CD8-positive, alpha-beta T cell (primary cell): ENCODE measurements at regions of chr13 and their contacts with region 1.

Region 1: DNA sequence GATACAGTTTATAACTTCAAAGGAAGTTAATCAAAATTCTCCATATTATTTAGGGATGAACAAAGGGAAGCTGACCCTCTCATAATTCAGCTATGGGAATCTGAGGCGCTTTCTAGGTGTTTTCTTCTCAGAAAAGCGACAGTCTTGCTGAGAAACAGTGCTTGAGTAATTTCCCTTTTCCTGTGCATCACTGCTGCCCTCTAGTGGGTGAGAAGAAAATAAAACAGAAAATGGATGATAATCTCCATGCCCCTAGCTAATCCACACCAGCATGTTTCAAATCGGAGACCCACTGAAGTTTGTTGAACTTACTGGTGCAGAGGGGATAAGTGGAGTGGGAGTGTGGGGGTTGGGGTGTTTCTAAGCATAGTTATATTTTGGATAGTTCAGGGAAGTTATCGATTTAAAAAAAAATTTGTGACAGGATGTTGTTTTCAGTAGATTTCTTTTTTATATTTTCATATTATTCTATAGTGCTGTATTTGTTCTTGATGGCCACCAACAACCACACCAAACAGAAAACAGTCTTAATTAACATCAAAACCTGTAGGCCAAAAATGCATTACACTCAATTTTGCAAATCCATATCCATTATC is 21.4 kb downstream of the LCP1 start:
- DNase-seq: peak in 3 of 9 experiments; percentile 41 to 92 (median 85)
- ATAC-seq: peak; percentile 76
- H3K4me3 ChIP-seq: no peak overlapping the region
- H3K4me3 Mint-ChIP-seq: peak overlapping the region; percentile 73
- H3K27ac ChIP-seq: peak overlapping the region in 1 of 2 experiments; percentile 77
- H3K27ac Mint-ChIP-seq: peak overlapping the region; percentile 94
- H3K4me1 ChIP-seq: peaks cover 45% of the 10 kb centered on the region
- H3K4me1 Mint-ChIP-seq: peaks cover 55% of the 10 kb centered on the region
- H3K27me3 ChIP-seq: no peaks in the 10 kb centered on the region
- H3K27me3 Mint-ChIP-seq: no peaks in the 10 kb centered on the region
- CTCF ChIP-seq: peak; percentile 79

Region 2: DNA sequence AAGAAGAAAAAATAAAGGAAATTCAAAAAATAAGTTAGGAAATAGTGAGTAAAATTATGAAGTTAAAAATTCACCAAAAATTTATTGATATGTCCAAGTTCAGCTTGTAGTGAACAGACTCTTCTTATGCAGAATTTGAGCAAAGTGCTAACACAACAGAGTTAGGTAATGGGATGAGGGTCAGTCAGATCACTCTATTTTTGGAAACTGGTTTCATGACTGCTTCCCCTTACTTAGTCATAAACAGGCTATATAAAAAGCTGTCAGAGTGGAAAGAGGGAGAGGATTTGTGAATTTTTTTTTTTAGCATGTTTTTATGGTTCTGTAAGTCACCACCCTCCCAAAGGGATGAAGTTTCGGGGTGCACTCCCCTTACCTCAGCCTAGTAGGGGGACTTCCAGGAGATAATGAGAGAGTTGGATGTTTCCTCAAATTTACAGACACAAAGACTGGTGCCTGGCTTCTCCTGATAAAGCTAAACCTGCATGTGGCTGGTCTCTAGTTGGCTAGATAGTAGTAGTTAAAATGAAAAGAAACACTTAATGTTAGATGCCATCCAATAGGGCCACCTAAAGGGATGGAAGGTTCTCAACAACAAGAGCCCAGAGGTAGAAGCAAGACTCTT is 60.3 kb before region 1 on chr13:
- CTCF ChIA-PET with region 1: no interaction called
- POLR2A ChIA-PET with region 1: no interaction called
- intact Hi-C with region 1: no loop called
- DNase-seq: no peak
- ATAC-seq: no peak
- H3K4me3 ChIP-seq: no peak overlapping the region
- H3K4me3 Mint-ChIP-seq: no peak overlapping the region
- H3K27ac ChIP-seq: no peak overlapping the region
- H3K27ac Mint-ChIP-seq: no peak overlapping the region
- H3K4me1 ChIP-seq: no peaks in the 10 kb centered on the region
- H3K4me1 Mint-ChIP-seq: no peaks in the 10 kb centered on the region
- H3K27me3 ChIP-seq: no peaks in the 10 kb centered on the region
- H3K27me3 Mint-ChIP-seq: peaks cover 5% of the 10 kb centered on the region
- CTCF ChIP-seq: no peak

Region 3: DNA sequence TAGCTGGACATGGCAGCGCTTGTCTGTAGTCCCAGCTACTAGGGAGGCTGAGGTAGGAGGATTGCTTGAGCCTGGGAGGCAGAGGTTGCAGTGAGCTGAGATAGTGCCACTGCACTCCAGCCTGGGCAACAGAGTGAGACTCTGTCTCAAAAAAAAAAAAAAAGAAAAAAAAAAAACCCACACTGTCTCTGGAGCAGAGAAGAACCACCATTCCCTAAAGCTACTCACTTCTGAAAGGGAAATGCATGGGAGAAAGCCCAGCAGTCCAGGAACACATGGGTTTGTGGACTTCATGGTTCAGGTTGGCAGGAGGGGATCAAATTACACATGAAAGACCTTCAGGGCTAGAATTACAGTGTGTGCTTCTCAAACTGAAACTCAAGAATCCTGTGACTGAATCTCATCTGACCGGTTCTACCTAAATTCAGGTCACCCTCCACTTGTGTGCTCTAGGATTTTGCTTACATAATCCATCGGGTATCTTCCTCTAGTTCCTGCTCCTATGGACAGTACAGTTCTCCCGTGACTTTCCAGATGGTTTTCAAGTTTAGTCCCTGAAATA is 25.5 kb before region 1 on chr13:
- CTCF ChIA-PET with region 1: interaction called, 10 read pairs
- POLR2A ChIA-PET with region 1: no interaction called
- intact Hi-C with region 1: no loop called
- DNase-seq: no peak
- ATAC-seq: no peak
- H3K4me3 ChIP-seq: no peak overlapping the region
- H3K4me3 Mint-ChIP-seq: no peak overlapping the region
- H3K27ac ChIP-seq: peak overlapping the region in 1 of 2 experiments; percentile 24
- H3K27ac Mint-ChIP-seq: peak overlapping the region; percentile 84
- H3K4me1 ChIP-seq: no peaks in the 10 kb centered on the region
- H3K4me1 Mint-ChIP-seq: peaks cover 30% of the 10 kb centered on the region
- H3K27me3 ChIP-seq: no peaks in the 10 kb centered on the region
- H3K27me3 Mint-ChIP-seq: no peaks in the 10 kb centered on the region
- CTCF ChIP-seq: no peak

Region 4: GRCh38 chr13:46146899-46147298 is 13.7 kb before region 1 on chr13:
- CTCF ChIA-PET with region 1: interaction called, 19 read pairs
- POLR2A ChIA-PET with region 1: no interaction called
- intact Hi-C with region 1: loop called in 1 of 2 experiments (anchors 1 kb)
- DNase-seq: no peak
- ATAC-seq: no peak
- H3K4me3 ChIP-seq: no peak overlapping the region
- H3K4me3 Mint-ChIP-seq: no peak overlapping the region
- H3K27ac ChIP-seq: no peak overlapping the region
- H3K27ac Mint-ChIP-seq: no peak overlapping the region
- H3K4me1 ChIP-seq: peaks cover 7% of the 10 kb centered on the region
- H3K4me1 Mint-ChIP-seq: peaks cover 29% of the 10 kb centered on the region
- H3K27me3 ChIP-seq: no peaks in the 10 kb centered on the region
- H3K27me3 Mint-ChIP-seq: no peaks in the 10 kb centered on the region
- CTCF ChIP-seq: no peak

Region 5: GRCh38 chr13:46176756-46177155 is 16.2 kb after region 1 on chr13:
- CTCF ChIA-PET with region 1: interaction called, 148 read pairs
- POLR2A ChIA-PET with region 1: interaction called, 15 read pairs
- intact Hi-C with region 1: no loop called
- DNase-seq: peak in 1 of 9 experiments; percentile 62
- ATAC-seq: no peak
- H3K4me3 ChIP-seq: peak overlapping the region; percentile 40
- H3K4me3 Mint-ChIP-seq: peak overlapping the region; percentile 79
- H3K27ac ChIP-seq: peak overlapping the region; percentile 51 to 94
- H3K27ac Mint-ChIP-seq: peak overlapping the region; percentile 94
- H3K4me1 ChIP-seq: peaks cover 66% of the 10 kb centered on the region
- H3K4me1 Mint-ChIP-seq: peaks cover 66% of the 10 kb centered on the region
- H3K27me3 ChIP-seq: no peaks in the 10 kb centered on the region
- H3K27me3 Mint-ChIP-seq: no peaks in the 10 kb centered on the region
- CTCF ChIP-seq: no peak

Region 6: DNA sequence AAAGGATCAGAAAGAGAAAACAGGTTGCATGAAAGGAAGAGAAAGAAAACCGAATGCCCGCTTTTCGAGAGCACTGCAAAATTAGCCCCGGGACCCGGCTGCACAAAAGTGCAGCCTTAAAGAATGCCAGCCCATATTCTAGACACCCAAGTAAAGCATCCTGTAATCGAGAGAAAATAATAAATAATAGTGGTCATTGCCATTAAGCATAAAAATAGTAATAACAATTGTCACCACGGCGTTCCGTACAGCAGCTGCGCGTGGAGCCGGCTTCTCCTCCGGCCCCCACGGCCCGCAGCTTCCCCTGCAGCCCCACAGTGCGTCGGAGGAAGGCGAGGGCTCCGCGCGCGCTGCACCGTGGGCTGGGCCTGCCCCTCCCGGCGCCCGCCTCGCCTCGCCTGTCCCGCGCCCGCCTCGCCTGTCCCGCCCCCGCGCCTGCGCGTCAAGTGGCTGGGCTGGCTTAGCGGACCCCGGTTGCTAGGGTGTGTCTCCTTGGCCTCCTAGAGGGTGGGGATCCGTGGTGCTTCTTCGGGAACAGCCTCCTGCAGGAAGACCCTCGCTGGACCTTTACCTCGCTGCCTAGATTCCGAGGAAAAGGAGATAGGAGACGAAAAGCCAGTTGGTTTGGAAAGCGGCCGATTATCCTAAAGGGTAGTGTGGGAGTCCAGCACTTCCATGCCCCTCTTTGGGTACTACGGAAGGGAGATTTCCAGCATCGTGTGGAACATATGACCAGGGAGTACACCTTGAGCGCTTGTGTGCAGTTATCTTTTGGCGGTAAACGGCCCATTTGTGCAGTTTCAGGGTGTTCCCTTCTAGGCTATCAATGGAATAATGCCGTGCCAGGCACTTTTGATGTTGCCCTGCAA is 51.1 kb after region 1 on chr13 and contains the start of gene LRRC63:
- CTCF ChIA-PET with region 1: interaction called, 7 read pairs
- POLR2A ChIA-PET with region 1: no interaction called
- intact Hi-C with region 1: loop called (anchors 1 to 10 kb)
- DNase-seq: peak; percentile 58 to 91 (median 84)
- ATAC-seq: peak; percentile 92
- H3K4me3 ChIP-seq: peak within 1 kb of the TSS; percentile 69 to 73
- H3K4me3 Mint-ChIP-seq: peak within 1 kb of the TSS; percentile 86
- H3K27ac ChIP-seq: peak within 1 kb of the TSS; percentile 74 to 90
- H3K27ac Mint-ChIP-seq: peak within 1 kb of the TSS; percentile 93
- H3K4me1 ChIP-seq: peaks cover 13% of the 10 kb centered on the region
- H3K4me1 Mint-ChIP-seq: peaks cover 19% of the 10 kb centered on the region
- H3K27me3 ChIP-seq: no peaks in the 10 kb centered on the region
- H3K27me3 Mint-ChIP-seq: no peaks in the 10 kb centered on the region
- CTCF ChIP-seq: no peak
- total RNA-seq, gene LRRC63: 0.22 to 0.31 TPM

Region 7: GRCh38 chr13:46232281-46232680 is 71.7 kb after region 1 on chr13:
- CTCF ChIA-PET with region 1: no interaction called
- POLR2A ChIA-PET with region 1: no interaction called
- intact Hi-C with region 1: no loop called
- DNase-seq: no peak
- ATAC-seq: no peak
- H3K4me3 ChIP-seq: no peak overlapping the region
- H3K4me3 Mint-ChIP-seq: no peak overlapping the region
- H3K27ac ChIP-seq: no peak overlapping the region
- H3K27ac Mint-ChIP-seq: no peak overlapping the region
- H3K4me1 ChIP-seq: no peaks in the 10 kb centered on the region
- H3K4me1 Mint-ChIP-seq: no peaks in the 10 kb centered on the region
- H3K27me3 ChIP-seq: no peaks in the 10 kb centered on the region
- H3K27me3 Mint-ChIP-seq: no peaks in the 10 kb centered on the region
- CTCF ChIP-seq: no peak

Region 8: DNA sequence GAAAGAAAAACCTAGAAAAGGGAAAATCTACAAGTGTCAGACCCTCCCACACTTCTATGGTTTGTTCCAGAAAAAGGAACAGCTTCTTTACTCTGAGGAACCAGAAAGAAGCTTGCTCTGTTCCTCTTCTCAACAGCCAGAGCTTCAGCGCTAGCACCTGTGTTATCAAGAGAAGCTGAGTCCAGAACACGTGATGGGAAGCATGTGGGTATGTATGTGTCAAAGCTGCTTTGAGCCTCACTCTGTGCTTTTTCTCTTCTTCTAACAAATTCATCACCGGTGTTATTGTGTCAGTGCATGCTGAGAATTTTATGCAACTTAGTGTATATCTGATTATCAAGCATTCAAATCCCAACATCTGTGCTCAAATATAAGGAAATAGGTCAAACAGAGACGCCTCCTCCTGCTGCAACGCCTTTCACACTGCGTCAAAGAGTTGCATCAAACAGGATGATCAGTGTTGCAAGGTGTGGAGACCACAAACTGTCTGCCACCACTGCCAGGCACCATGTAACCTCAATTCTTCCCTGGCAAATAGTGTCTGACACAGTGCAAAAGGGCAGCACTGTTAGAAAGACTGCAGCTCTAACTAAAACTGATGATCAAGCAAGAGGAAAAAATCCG is 135.0 kb after region 1 on chr13:
- CTCF ChIA-PET with region 1: interaction called, 50 read pairs
- POLR2A ChIA-PET with region 1: interaction called, 6 read pairs
- intact Hi-C with region 1: no loop called
- DNase-seq: peak; percentile 46 to 96 (median 70)
- ATAC-seq: peak; percentile 81
- H3K4me3 ChIP-seq: peak overlapping the region; percentile 11 to 16
- H3K4me3 Mint-ChIP-seq: peak overlapping the region; percentile 60
- H3K27ac ChIP-seq: peak overlapping the region; percentile 69 to 79
- H3K27ac Mint-ChIP-seq: peak overlapping the region; percentile 96
- H3K4me1 ChIP-seq: peaks cover 49% of the 10 kb centered on the region
- H3K4me1 Mint-ChIP-seq: peaks cover 65% of the 10 kb centered on the region
- H3K27me3 ChIP-seq: no peaks in the 10 kb centered on the region
- H3K27me3 Mint-ChIP-seq: no peaks in the 10 kb centered on the region
- CTCF ChIP-seq: no peak